Activated naive CD4-positive, alpha-beta T cell treated with anti-CD3 and anti-CD28 coated beads for 36 hours (primary cell): ENCODE measurements at regions of chr20 and their contacts with region 1.

Region 1: GRCh38 chr20:59120491-59120890 is 43.1 kb upstream of the ZNF831 start:
- DNase-seq: peak; percentile 59
- H3K4me3 Mint-ChIP-seq: no peak overlapping the region
- H3K27ac Mint-ChIP-seq: no peak overlapping the region
- H3K4me1 Mint-ChIP-seq: peaks cover 75% of the 10 kb centered on the region
- H3K27me3 Mint-ChIP-seq: no peaks in the 10 kb centered on the region

Region 2: DNA sequence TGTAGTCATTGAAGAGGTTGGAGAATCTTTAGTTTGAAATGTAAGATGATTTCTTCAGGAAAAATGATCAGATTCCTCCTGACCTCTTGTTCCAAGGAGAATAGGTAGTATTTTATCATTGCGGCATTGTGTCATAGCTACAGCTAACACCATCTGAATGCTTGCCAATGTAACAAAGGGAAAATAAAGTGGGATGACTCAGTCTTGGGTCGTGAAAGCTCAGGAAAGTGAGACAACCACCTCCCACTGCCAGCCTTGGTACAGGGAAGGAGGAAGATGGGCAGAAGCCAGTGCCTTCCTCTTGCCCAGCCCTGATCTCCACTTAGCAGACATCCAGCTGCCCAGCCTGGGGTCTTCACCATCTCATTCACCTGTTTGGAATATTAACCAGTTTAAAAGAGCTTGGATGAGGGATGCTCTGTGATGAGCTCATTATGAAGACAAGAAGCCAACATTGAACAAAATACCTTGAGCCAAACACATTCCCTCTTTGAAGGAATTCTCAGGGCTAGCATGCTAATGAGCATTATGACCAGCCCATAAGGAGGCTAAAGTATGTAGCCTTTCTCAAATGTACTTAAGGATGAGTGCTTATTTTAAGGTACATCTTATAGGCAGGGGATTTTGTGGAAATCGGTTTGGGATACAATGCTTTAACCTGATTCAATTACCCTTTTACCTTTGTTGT is 565.3 kb before region 1 on chr20:
- CTCF ChIA-PET with region 1: no interaction called
- intact Hi-C with region 1: no loop called
- DNase-seq: no peak
- H3K4me3 Mint-ChIP-seq: no peak overlapping the region
- H3K27ac Mint-ChIP-seq: no peak overlapping the region
- H3K4me1 Mint-ChIP-seq: no peaks in the 10 kb centered on the region
- H3K27me3 Mint-ChIP-seq: peaks cover 3% of the 10 kb centered on the region

Region 3: GRCh38 chr20:59102841-59103299 is 17.6 kb before region 1 on chr20:
- CTCF ChIA-PET with region 1: interaction called, 11 read pairs
- intact Hi-C with region 1: no loop called
- DNase-seq: no peak
- H3K4me3 Mint-ChIP-seq: no peak overlapping the region
- H3K27ac Mint-ChIP-seq: peak overlapping the region; percentile 6
- H3K4me1 Mint-ChIP-seq: peaks cover 17% of the 10 kb centered on the region
- H3K27me3 Mint-ChIP-seq: no peaks in the 10 kb centered on the region

Region 4: DNA sequence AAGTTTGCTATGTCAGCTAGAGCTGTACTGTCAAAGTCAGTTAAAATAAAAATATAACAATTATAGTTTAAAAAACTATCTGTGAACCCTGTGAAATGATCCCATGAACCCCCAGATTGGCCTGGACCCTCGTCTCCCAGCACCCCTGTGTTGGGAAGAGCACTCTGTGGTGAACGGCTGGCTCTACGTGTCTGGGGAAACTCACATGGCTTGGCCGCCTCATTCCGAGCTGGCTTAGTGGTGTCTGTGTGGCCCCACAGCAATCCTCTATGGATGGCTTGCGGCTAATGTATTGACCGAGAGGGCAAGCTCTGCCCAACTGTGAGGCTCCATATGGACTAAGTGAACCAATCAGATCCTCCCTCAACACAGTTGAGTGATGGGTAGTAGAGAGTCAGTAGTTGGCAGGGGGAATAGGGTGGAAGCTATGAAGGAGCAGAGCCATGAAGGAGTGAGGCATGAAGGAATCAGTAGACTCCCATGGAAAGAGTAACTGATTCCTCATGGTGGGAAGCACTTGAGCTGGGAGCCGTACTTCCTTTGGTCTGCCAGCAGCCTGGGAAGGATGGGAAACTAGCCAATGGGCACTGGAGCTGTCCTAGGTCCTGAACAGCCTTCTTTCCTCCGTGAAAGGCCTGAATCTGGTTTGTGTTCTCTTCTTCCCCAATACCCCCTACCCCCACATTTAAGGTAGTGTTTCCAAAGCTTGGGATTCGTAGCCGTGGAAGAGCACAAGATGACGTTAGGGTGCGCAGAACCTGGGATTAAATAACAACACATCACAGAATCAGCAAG is 21.5 kb after region 1 on chr20:
- CTCF ChIA-PET with region 1: interaction called, 15 read pairs
- intact Hi-C with region 1: loop called (anchors 1 kb)
- DNase-seq: peak; percentile 45
- H3K4me3 Mint-ChIP-seq: no peak overlapping the region
- H3K27ac Mint-ChIP-seq: no peak overlapping the region
- H3K4me1 Mint-ChIP-seq: peaks cover 43% of the 10 kb centered on the region
- H3K27me3 Mint-ChIP-seq: no peaks in the 10 kb centered on the region

Region 5: GRCh38 chr20:59149651-59150504 is 29.4 kb after region 1 on chr20:
- CTCF ChIA-PET with region 1: interaction called, 6 read pairs
- intact Hi-C with region 1: loop called (anchors 1 kb)
- DNase-seq: peak; percentile 84
- H3K4me3 Mint-ChIP-seq: peak overlapping the region; percentile 30
- H3K27ac Mint-ChIP-seq: peak overlapping the region; percentile 82
- H3K4me1 Mint-ChIP-seq: peaks cover 88% of the 10 kb centered on the region
- H3K27me3 Mint-ChIP-seq: no peaks in the 10 kb centered on the region

Region 6: DNA sequence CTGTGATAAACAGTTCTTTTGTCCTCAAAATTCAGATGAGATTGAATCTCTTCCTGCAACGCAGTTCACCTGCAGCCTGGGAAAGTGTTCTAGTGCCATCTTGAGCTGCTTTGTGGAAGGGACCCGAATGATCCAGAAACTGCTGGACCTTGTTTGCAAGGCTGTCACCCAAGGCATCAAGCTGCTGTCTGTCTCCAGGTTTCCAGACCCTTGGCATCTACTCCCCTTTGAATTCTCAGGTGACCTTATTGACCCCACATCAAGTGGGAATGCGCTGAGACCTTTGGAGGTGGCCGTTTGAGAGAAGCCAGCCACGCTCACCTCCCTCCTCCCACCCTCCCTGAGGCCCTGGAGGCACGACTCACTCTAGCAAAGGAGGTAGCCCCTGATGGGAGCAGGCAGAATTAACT is 292.4 kb after region 1 on chr20:
- CTCF ChIA-PET with region 1: no interaction called
- intact Hi-C with region 1: no loop called
- DNase-seq: no peak
- H3K4me3 Mint-ChIP-seq: no peak overlapping the region
- H3K27ac Mint-ChIP-seq: no peak overlapping the region
- H3K4me1 Mint-ChIP-seq: no peaks in the 10 kb centered on the region
- H3K27me3 Mint-ChIP-seq: no peaks in the 10 kb centered on the region